Mammary epithelial cell (primary cell): ENCODE measurements at regions of chr16 and their contacts with region 1.

Region 1: GRCh38 chr16:58236231-58236690 is 38.4 kb upstream of the CSNK2A2 start:
- DNase-seq: peak; percentile 61
- H3K4me3 ChIP-seq: peak overlapping the region; percentile 19 to 52 (median 51)
- H3K27ac ChIP-seq: no peak overlapping the region
- H3K4me1 ChIP-seq: peaks cover 4% of the 10 kb centered on the region
- H3K27me3 ChIP-seq: peaks cover 4% of the 10 kb centered on the region
- CTCF ChIP-seq: no peak

Region 2: GRCh38 chr16:58198022-58198683 is 38.1 kb before region 1 on chr16 and contains the start of gene CSNK2A2:
- CTCF ChIA-PET with region 1: interaction called, 20 read pairs
- dilution Hi-C with region 1: no loop called
- in situ Hi-C with region 1: no loop called
- intact Hi-C with region 1: loop called (anchors 5 kb)
- DNase-seq: peak; percentile 59
- H3K4me3 ChIP-seq: peak within 1 kb of the TSS; percentile 74 to 88 (median 82)
- H3K27ac ChIP-seq: no peak within 1 kb of the TSS
- H3K4me1 ChIP-seq: peaks cover 16% of the 10 kb centered on the region
- H3K27me3 ChIP-seq: no peaks in the 10 kb centered on the region
- CTCF ChIP-seq: peak; percentile 31 to 50
- total RNA-seq, gene CSNK2A2: 29.3 to 79.7 TPM

Region 3: DNA sequence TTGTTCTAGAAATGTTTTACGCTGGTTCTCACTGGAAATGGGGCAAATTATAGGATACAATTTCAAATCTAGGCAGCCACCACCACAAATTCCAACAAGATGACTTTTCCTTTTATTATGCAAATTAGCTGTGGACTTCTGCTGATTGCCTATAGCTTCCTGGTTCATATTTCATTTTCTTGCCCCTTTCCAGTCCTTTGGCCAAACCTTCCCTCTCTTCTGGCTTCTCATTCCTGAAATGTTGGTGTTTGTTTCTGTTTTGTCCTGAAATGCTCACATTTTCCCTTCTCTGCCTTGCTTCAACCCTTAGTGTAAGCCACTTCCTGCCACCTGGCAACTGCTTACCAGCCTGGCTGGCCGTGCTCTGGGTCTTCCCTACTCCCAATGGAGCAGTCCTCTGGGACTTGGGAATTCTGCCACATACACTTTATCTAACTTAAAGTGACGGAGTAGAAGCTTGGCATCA is 44.6 kb after region 1 on chr16:
- CTCF ChIA-PET with region 1: no interaction called
- dilution Hi-C with region 1: no loop called
- in situ Hi-C with region 1: no loop called
- intact Hi-C with region 1: loop called (anchors 5 kb)
- DNase-seq: peak; percentile 55
- H3K4me3 ChIP-seq: peak overlapping the region in 1 of 3 experiments; percentile 11
- H3K27ac ChIP-seq: peak overlapping the region; percentile 85
- H3K4me1 ChIP-seq: peaks cover 19% of the 10 kb centered on the region
- H3K27me3 ChIP-seq: no peaks in the 10 kb centered on the region
- CTCF ChIP-seq: no peak

Region 4: DNA sequence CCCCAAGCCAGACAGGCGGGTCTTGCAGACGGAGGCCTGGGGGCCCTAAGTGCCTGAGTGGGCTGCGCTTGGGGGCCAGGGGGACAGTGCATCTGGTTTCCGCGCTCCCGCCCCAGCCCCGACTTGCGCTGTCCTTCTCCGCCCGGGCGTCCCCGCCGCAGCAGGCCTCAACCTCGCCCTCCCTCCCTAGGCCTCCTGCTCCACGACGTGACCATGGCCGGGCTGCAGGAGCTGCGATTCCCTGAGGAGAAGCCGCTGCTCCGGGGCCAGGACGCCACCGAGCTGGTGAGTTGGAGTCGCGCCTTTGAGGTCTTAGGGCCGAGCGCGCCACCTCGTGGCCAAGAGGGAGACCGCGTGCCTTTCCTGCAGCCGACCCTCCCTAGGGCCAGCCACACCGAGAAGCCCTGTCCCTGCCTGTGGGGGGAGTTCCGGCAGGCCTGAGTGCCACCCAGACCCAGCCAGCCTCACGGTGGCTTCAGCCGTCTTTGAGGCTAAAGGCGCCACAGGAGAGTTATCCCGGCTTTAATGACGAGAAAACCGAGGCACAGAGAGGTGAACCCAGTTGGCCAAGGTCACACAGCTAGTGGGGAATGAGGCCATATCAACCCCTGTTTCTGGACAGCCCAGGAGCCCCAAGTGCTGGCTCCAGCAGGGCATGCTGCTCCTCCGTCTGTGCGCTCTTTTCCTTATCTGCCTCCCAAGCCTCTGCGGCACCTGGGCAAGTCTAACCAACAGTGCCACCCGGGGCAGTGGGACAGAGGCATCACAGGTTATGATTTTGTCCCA is 251.5 kb after region 1 on chr16:
- CTCF ChIA-PET with region 1: no interaction called
- dilution Hi-C with region 1: no loop called
- in situ Hi-C with region 1: no loop called
- intact Hi-C with region 1: no loop called
- DNase-seq: peak; percentile 51
- H3K4me3 ChIP-seq: peak overlapping the region in 2 of 3 experiments; percentile 33 to 40
- H3K27ac ChIP-seq: no peak overlapping the region
- H3K4me1 ChIP-seq: peaks cover 5% of the 10 kb centered on the region
- H3K27me3 ChIP-seq: no peaks in the 10 kb centered on the region
- CTCF ChIP-seq: peak; percentile 69 to 94